Activated CD4-positive, alpha-beta memory T cell treated with anti-CD3 and anti-CD28 coated beads for 36 hours (primary cell): ENCODE measurements at regions of chr2 and their contacts with region 1.

Region 1: DNA sequence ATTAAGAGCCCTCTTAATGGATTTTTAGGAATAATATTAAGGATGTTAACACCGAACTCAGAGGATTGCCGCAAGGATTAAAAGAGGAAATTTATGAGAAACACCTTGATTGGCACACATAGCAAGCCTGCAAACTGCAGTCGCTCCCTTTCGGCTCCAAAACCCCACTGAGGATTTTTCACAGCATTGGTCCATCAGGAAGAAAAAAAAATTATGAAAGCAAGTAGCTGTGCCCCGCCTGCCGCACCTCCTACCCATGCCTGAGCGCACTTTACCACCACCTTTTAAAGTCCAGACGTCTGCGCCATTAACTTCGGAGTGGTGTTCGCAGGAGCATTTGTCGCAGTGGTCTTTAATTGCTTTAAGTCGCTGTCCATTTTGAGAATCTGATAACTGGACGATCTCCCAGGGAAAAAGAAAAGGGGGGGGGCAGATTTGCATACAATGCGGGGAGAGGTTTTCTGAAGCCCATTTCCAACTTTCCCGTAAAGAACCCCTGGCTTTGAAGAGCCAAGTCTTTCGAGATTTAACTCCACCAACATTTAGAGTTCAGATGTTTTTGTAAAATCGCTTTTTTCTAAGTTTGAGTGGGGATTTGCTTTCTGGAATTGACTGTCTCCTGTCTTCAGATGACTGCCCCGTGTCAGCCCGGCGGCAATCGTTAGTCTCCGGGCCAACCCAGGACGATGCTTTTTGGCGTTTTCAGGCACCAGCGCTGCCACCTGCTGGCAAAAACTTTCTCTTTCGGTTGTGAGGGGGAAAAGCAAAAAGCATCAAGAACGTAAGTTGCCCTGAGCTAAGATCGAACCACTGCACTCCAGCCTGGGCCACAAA is 914 bp upstream of the TRABD2A start:
- DNase-seq: peak; percentile 95
- H3K4me3 Mint-ChIP-seq: peak overlapping the region; percentile 94
- H3K27ac Mint-ChIP-seq: peak overlapping the region; percentile 99
- H3K4me1 Mint-ChIP-seq: peaks cover 44% of the 10 kb centered on the region
- H3K27me3 Mint-ChIP-seq: no peaks in the 10 kb centered on the region

Region 2: GRCh38 chr2:84495539-84496146 is 386.2 kb before region 1 on chr2:
- CTCF ChIA-PET with region 1: interaction called, 25 read pairs
- POLR2A ChIA-PET with region 1: no interaction called
- intact Hi-C with region 1: loop called (anchors 1 kb)
- DNase-seq: no peak
- H3K4me3 Mint-ChIP-seq: no peak overlapping the region
- H3K27ac Mint-ChIP-seq: no peak overlapping the region
- H3K4me1 Mint-ChIP-seq: peaks cover 17% of the 10 kb centered on the region
- H3K27me3 Mint-ChIP-seq: no peaks in the 10 kb centered on the region

Region 3: DNA sequence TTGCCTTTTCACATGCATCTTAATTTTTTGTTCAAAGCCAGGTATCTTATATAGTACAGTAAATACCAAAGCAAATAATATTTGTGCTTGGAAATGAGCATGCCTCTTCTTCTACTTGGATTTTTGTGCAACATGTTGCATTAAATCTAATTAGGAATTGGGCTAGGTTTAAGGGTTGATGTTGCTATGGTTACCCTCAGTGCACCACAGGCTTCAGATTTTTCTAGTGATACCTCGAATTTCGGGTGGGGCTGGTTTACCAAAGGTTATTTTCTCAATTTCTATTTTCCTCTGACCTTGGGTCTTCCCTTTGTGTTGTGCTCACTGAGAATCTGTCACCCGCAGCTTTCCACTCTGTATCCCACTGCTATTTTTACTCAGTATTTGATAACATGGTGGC is 278.7 kb before region 1 on chr2:
- CTCF ChIA-PET with region 1: no interaction called
- POLR2A ChIA-PET with region 1: no interaction called
- intact Hi-C with region 1: no loop called
- DNase-seq: no peak
- H3K4me3 Mint-ChIP-seq: no peak overlapping the region
- H3K27ac Mint-ChIP-seq: no peak overlapping the region
- H3K4me1 Mint-ChIP-seq: no peaks in the 10 kb centered on the region
- H3K27me3 Mint-ChIP-seq: no peaks in the 10 kb centered on the region

Region 4: GRCh38 chr2:84639751-84640150 is 242.0 kb before region 1 on chr2:
- CTCF ChIA-PET with region 1: no interaction called
- POLR2A ChIA-PET with region 1: no interaction called
- intact Hi-C with region 1: loop called (anchors 2 kb)
- DNase-seq: no peak
- H3K4me3 Mint-ChIP-seq: no peak overlapping the region
- H3K27ac Mint-ChIP-seq: no peak overlapping the region
- H3K4me1 Mint-ChIP-seq: peaks cover 2% of the 10 kb centered on the region
- H3K27me3 Mint-ChIP-seq: no peaks in the 10 kb centered on the region

Region 5: DNA sequence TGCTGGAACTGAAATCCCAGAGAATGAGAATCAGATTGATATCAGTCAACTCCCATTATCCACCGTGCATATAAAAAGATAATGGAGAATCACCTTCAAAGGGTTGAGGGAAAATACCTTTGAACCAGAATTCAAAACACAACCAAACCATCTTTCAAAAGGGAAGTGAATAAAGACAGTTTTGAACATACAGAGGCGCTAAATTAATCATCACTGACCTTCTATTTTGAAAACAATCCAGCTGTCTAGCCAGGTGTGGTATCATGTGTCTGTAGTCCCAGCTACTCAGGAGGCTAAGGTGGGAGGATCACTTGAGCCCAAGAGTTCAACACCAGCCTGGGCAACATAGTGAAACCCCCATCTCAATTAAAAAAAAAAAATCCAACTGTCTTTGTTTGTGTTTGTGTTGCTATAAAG is 64.6 kb before region 1 on chr2:
- CTCF ChIA-PET with region 1: interaction called, 3 read pairs
- POLR2A ChIA-PET with region 1: no interaction called
- intact Hi-C with region 1: loop called (anchors 1 kb)
- DNase-seq: peak; percentile 39
- H3K4me3 Mint-ChIP-seq: no peak overlapping the region
- H3K27ac Mint-ChIP-seq: no peak overlapping the region
- H3K4me1 Mint-ChIP-seq: peaks cover 31% of the 10 kb centered on the region
- H3K27me3 Mint-ChIP-seq: no peaks in the 10 kb centered on the region

Region 6: DNA sequence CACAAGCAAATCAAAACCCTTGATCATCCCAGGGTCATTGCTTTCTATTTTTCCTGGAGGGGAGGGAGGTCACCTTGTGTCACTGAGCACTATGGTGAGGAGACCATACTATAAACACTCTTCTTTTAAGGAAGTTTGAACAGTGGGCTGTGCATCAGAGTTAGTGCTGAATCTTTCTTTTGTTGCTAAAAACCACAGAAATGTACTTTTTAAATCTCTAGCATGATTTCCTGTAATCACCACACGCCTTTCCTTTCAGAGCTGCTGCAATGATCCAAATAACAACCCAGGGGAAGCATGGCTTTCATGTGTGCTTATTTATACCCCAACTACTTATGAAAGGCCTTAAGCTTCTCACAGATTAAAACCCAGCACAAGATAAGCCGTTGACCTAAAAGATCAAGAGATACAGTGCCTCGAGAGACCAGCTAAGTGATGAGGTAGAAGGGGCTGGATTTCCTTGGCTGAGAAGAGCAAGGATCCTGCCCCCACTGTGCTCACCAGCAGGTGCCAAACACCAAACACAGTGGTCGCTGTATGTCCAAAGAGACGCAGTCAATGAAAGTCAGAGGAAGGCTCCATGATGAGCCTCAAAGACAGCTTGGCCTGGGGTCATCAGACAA is 35.6 kb before region 1 on chr2:
- CTCF ChIA-PET with region 1: interaction called, 16 read pairs
- POLR2A ChIA-PET with region 1: interaction called, 4 read pairs
- intact Hi-C with region 1: loop called (anchors 1 kb)
- DNase-seq: no peak
- H3K4me3 Mint-ChIP-seq: peak overlapping the region; percentile 53
- H3K27ac Mint-ChIP-seq: peak overlapping the region; percentile 97
- H3K4me1 Mint-ChIP-seq: peaks cover 87% of the 10 kb centered on the region
- H3K27me3 Mint-ChIP-seq: no peaks in the 10 kb centered on the region

Region 7: DNA sequence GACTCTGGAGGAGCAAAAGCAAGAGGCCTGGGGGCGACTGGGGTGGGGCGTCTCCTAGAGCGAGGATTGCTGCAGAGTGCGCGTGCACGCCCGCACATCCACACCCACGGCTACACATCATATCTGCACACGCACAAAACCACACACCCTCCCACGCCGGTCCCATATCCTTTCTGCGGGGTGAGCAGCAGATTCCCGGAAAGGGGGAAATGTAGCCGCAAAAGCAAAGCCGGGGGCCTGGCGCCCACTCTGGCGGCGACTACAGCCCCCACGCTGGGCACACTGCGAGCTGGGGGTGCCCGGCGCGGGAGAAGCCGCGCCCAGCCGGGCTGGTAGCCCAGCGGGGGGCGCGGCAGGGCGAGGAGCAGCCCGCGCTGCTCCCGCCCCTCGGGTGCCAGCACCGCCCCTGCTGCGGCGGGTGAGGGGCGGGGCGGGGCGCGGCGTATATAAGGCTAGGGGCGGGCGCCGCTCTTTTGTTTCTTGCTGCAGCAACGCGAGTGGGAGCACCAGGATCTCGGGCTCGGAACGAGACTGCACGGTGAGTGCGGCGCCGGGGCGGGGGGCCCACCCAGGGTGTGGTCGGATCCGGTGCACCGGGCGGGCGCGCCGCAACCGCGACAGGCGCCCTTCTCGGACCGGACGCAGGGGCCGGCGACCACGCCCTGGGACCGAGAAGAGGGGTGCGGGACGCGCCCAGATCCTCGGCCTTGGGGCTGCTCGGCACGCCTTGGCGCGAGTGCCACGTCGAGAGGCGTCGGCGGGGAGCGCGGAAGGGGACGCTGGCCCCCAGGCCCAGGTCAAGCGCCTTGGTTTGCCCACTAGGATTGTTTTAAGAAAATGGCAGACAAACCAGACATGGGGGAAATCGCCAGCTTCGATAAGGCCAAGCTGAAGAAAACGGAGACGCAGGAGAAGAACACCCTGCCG is 23.6 kb after region 1 on chr2 and contains the start of gene TMSB10:
- CTCF ChIA-PET with region 1: interaction called, 16 read pairs
- POLR2A ChIA-PET with region 1: interaction called, 39 read pairs
- intact Hi-C with region 1: loop called (anchors 1 kb)
- DNase-seq: peak; percentile 90
- H3K4me3 Mint-ChIP-seq: peak within 1 kb of the TSS; percentile 91
- H3K27ac Mint-ChIP-seq: peak within 1 kb of the TSS; percentile 93
- H3K4me1 Mint-ChIP-seq: peaks cover 66% of the 10 kb centered on the region
- H3K27me3 Mint-ChIP-seq: no peaks in the 10 kb centered on the region
- total RNA-seq, gene TMSB10: 2,535 to 2,567 TPM

Region 8: DNA sequence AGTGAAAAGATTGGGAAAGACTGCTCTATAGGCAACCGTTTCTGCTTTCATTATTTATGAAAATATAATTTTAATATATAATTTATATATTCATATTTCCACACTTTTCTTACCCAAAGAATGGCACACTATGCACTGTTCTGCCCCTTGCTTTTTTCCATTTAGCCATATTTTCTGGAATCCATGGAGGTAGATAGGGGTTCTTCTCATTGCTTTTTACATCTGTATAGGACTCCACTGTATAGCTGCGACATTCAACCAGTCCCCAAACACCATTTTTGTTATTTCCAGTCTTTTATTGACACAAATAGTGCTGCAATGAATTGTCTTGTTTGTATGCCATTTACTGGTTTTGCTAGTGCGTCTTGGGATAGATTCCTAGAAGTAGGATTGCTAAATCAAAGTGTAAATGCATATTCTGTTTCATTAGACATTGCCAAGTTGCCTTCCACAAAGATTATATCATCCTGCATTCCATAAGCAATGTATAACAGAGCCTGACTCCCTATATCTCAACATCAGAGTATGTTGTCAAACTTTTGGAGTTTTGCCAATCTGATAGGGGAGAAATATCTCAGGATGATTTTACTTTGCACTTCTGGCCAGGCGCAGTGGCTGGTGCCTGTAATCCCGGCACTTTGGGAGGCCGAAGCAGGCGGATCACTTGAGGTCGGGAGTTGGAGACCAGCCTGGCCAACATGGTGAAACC is 224.9 kb after region 1 on chr2:
- CTCF ChIA-PET with region 1: no interaction called
- POLR2A ChIA-PET with region 1: no interaction called
- intact Hi-C with region 1: no loop called
- DNase-seq: no peak
- H3K4me3 Mint-ChIP-seq: no peak overlapping the region
- H3K27ac Mint-ChIP-seq: no peak overlapping the region
- H3K4me1 Mint-ChIP-seq: no peaks in the 10 kb centered on the region
- H3K27me3 Mint-ChIP-seq: peaks cover 10% of the 10 kb centered on the region